HepG2 (cell line): ENCODE measurements at regions of chr6 and their contacts with region 1.

Region 1: DNA sequence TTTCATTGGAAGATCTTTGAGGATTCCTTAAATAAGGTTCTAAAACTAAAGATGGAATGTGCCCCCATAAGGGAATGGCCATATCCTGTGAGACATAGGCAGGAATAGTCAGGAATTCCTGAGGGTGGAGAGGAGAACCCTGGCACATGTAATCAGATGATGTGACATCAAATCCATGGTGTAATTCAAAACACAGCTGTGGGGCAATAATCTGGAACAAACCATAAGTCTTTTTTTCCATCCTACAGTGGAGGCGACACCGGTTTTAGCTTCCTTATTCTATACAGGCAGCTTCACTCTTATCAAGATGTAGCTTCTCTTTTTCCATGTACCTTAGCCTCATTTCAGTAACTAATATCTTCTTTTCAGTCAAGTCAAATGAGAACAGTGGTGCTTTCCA is 133.6 kb upstream of the CITED2 start:
- DNase-seq: peak; percentile 23
- ATAC-seq: peak; percentile 40
- H3K4me3 ChIP-seq: no peak overlapping the region
- H3K27ac ChIP-seq: peak overlapping the region; percentile 28
- H3K4me1 ChIP-seq: peaks cover 42% of the 10 kb centered on the region
- H3K27me3 ChIP-seq: no peaks in the 10 kb centered on the region
- CTCF ChIP-seq: no peak
- EP300 ChIP-seq: no peak
- POLR2A ChIP-seq: no peak
- RAD21 ChIP-seq: no peak

Region 2: GRCh38 chr6:139496654-139497344 is 11.2 kb before region 1 on chr6:
- CTCF ChIA-PET with region 1: no interaction called
- POLR2A ChIA-PET with region 1: no interaction called
- in situ Hi-C with region 1: no loop called
- intact Hi-C with region 1: loop called (anchors 1 kb)
- DNase-seq: no peak
- ATAC-seq: peak; percentile 84
- H3K4me3 ChIP-seq: no peak overlapping the region
- H3K27ac ChIP-seq: no peak overlapping the region
- H3K4me1 ChIP-seq: peaks cover 14% of the 10 kb centered on the region
- H3K27me3 ChIP-seq: no peaks in the 10 kb centered on the region
- CTCF ChIP-seq: no peak
- EP300 ChIP-seq: no peak
- POLR2A ChIP-seq: no peak
- RAD21 ChIP-seq: no peak